ENCODE measurements at regions of chrX and their contacts with region 1.

Region 1: DNA sequence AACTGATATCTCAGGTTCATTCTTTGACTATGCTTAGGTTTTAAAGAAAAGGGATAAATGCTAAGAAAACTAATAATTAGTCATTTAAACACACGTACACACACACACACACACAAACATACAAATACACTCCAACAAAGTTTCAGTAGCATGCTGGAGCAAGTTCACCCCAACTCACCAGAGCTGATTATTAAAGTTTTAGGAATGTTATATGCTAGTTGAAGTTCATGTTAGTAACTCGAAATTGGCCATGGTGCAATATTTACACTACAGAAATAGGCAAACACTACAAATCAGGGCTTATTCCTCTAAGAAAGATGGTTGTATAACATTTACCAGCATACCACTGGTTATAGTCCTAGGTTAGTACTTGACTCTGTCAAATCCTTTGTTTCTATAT is 384.0 kb upstream of the DIPK2B start:
- DNase-seq: no peak
- H3K4me3 Mint-ChIP-seq: no peak overlapping the region
- H3K27ac Mint-ChIP-seq: no peak overlapping the region
- H3K4me1 Mint-ChIP-seq: peaks cover 10% of the 10 kb centered on the region
- H3K27me3 Mint-ChIP-seq: no peaks in the 10 kb centered on the region

Region 2: DNA sequence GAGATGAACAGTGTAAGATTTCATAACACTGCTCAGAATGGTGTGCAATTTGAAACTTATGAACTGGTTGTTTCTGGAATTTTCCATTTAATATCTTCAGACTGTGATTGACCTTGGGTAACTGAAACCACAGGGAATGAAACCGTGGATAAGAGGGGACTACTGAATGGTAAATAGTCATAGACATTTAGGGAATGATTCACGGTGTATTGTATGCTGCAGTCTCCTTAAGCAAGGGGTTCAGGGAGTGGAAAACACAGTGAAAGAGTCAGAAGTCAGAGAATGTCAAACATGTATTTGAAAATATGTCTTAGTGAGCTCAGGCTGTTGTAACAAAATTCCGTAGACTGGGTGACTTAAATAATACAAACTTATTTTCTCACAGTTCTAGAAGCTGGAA is 14.1 kb after region 1 on chrX:
- CTCF ChIA-PET with region 1: no interaction called
- intact Hi-C with region 1: loop called (anchors 1 kb)
- DNase-seq: no peak
- H3K4me3 Mint-ChIP-seq: no peak overlapping the region
- H3K27ac Mint-ChIP-seq: no peak overlapping the region
- H3K4me1 Mint-ChIP-seq: no peaks in the 10 kb centered on the region
- H3K27me3 Mint-ChIP-seq: no peaks in the 10 kb centered on the region